Activated B cell treated with CpG ODN at 0.5 μM for 24 hours (primary cell): ENCODE measurements at regions of chr5 and their contacts with region 1.

Region 1: DNA sequence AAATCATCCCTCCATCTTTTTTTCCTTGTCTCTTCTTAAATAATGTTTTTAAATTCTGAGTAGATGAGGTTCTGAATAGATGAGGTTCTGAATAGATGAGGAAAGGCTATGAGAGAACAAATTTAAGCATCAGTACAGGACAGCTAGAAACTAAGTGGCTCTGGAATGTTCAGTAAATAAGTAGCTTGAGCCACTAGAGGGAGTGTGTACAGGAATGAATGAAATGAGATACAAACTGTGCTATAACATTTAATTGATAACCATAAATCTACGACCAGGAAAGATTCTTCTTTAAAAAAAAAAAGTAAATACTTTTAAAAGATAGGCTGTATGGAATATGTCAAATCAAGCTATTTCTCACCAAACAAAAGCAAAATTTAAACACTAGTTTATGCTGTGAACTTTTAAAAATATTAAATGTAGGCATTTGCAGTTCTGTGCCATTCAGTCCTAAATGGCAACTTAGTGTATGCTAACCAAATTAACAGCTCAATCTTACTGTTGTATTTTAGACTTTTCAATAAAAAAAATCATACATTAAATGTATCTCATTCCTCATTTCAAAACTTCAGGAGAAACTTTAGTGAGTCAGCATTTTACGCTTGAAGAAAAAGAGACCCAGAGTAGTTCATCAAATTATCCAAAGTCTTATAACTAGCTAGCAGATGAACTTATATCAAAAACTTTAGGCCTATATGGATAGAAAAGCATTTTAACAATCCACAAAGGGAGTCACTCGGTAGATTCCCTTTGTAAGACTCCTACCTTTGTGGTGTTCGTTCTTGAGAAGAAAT is 70.4 kb upstream of the SNX2 start:
- DNase-seq: no peak
- ATAC-seq: no peak
- H3K4me3 Mint-ChIP-seq: peak overlapping the region; percentile 7
- H3K27ac Mint-ChIP-seq: peak overlapping the region; percentile 94
- H3K4me1 Mint-ChIP-seq: peaks cover 63% of the 10 kb centered on the region
- H3K27me3 Mint-ChIP-seq: no peaks in the 10 kb centered on the region
- CTCF ChIP-seq: no peak

Region 2: GRCh38 chr5:122322801-122323548 is 381.5 kb before region 1 on chr5:
- CTCF ChIA-PET with region 1: no interaction called
- POLR2A ChIA-PET with region 1: no interaction called
- intact Hi-C with region 1: no loop called
- DNase-seq: no peak
- ATAC-seq: no peak
- H3K4me3 Mint-ChIP-seq: no peak overlapping the region
- H3K27ac Mint-ChIP-seq: no peak overlapping the region
- H3K4me1 Mint-ChIP-seq: no peaks in the 10 kb centered on the region
- H3K27me3 Mint-ChIP-seq: peaks cover 2% of the 10 kb centered on the region
- CTCF ChIP-seq: no peak

Region 3: GRCh38 chr5:122629121-122629677 is 75.2 kb before region 1 on chr5:
- CTCF ChIA-PET with region 1: no interaction called
- POLR2A ChIA-PET with region 1: no interaction called
- intact Hi-C with region 1: no loop called
- DNase-seq: no peak
- ATAC-seq: no peak
- H3K4me3 Mint-ChIP-seq: no peak overlapping the region
- H3K27ac Mint-ChIP-seq: no peak overlapping the region
- H3K4me1 Mint-ChIP-seq: no peaks in the 10 kb centered on the region
- H3K27me3 Mint-ChIP-seq: no peaks in the 10 kb centered on the region
- CTCF ChIP-seq: no peak

Region 4: GRCh38 chr5:122723606-122724352 is 19.3 kb after region 1 on chr5:
- CTCF ChIA-PET with region 1: interaction called, 16 read pairs
- POLR2A ChIA-PET with region 1: interaction called, 6 read pairs
- intact Hi-C with region 1: loop called (anchors 1 kb)
- DNase-seq: no peak
- ATAC-seq: peak; percentile 89
- H3K4me3 Mint-ChIP-seq: peak overlapping the region; percentile 74
- H3K27ac Mint-ChIP-seq: peak overlapping the region; percentile 91
- H3K4me1 Mint-ChIP-seq: peaks cover 57% of the 10 kb centered on the region
- H3K27me3 Mint-ChIP-seq: no peaks in the 10 kb centered on the region
- CTCF ChIP-seq: no peak

Region 5: GRCh38 chr5:122736086-122736845 is 31.8 kb after region 1 on chr5:
- CTCF ChIA-PET with region 1: interaction called, 6 read pairs
- POLR2A ChIA-PET with region 1: interaction called, 4 read pairs
- intact Hi-C with region 1: loop called (anchors 5 kb)
- DNase-seq: no peak
- ATAC-seq: peak; percentile 95
- H3K4me3 Mint-ChIP-seq: peak overlapping the region; percentile 9
- H3K27ac Mint-ChIP-seq: peak overlapping the region; percentile 26
- H3K4me1 Mint-ChIP-seq: peaks cover 16% of the 10 kb centered on the region
- H3K27me3 Mint-ChIP-seq: no peaks in the 10 kb centered on the region
- CTCF ChIP-seq: no peak

Region 6: GRCh38 chr5:122756263-122756911 is 51.9 kb after region 1 on chr5:
- CTCF ChIA-PET with region 1: interaction called, 4 read pairs
- POLR2A ChIA-PET with region 1: interaction called, 6 read pairs
- intact Hi-C with region 1: loop called (anchors 1 kb)
- DNase-seq: no peak
- ATAC-seq: peak; percentile 86
- H3K4me3 Mint-ChIP-seq: peak overlapping the region; percentile 1
- H3K27ac Mint-ChIP-seq: peak overlapping the region; percentile 72
- H3K4me1 Mint-ChIP-seq: peaks cover 28% of the 10 kb centered on the region
- H3K27me3 Mint-ChIP-seq: no peaks in the 10 kb centered on the region
- CTCF ChIP-seq: no peak

Region 7: DNA sequence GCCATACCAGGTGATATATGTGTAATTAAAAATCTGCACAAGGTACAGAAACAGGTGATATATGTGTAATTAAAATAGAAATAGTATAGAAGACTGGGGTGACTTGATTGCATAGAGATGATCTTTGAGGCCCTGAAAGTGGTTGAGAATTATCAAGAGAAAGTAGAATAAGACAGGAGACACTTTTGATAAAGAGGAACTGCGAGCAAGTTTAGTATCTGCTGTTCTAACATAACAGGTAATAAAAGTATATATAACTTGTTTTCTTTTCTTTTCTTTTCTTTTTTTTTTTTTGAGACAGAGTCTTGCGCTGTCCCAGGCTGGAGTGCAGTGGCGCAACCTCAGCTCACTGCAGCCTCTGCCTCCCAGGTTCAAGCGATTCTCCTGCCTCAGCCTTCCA is 75.9 kb after region 1 on chr5:
- CTCF ChIA-PET with region 1: interaction called, 30 read pairs
- POLR2A ChIA-PET with region 1: interaction called, 84 read pairs
- intact Hi-C with region 1: loop called (anchors 1 kb)
- DNase-seq: no peak
- ATAC-seq: peak; percentile 19
- H3K4me3 Mint-ChIP-seq: peak overlapping the region; percentile 64
- H3K27ac Mint-ChIP-seq: peak overlapping the region; percentile 85
- H3K4me1 Mint-ChIP-seq: peaks cover 72% of the 10 kb centered on the region
- H3K27me3 Mint-ChIP-seq: no peaks in the 10 kb centered on the region
- CTCF ChIP-seq: no peak

Region 8: GRCh38 chr5:122845229-122846050 is 141.0 kb after region 1 on chr5 and contains the start of gene SNX24:
- CTCF ChIA-PET with region 1: interaction called, 9 read pairs
- POLR2A ChIA-PET with region 1: interaction called, 11 read pairs
- intact Hi-C with region 1: loop called (anchors 1 kb)
- DNase-seq: peak; percentile 72
- ATAC-seq: peak; percentile 82
- H3K4me3 Mint-ChIP-seq: peak within 1 kb of the TSS; percentile 90
- H3K27ac Mint-ChIP-seq: peak within 1 kb of the TSS; percentile 82
- H3K4me1 Mint-ChIP-seq: peaks cover 36% of the 10 kb centered on the region
- H3K27me3 Mint-ChIP-seq: no peaks in the 10 kb centered on the region
- CTCF ChIP-seq: no peak
- total RNA-seq, gene SNX24: 8.2 and 8.5 TPM in 2 replicates

Region 9: GRCh38 chr5:123511648-123512605 is 807.5 kb after region 1 on chr5 and contains the start of gene CSNK1G3:
- CTCF ChIA-PET with region 1: no interaction called
- POLR2A ChIA-PET with region 1: interaction called, 3 read pairs
- intact Hi-C with region 1: loop called (anchors 5 kb)
- DNase-seq: peak; percentile 81
- ATAC-seq: peak; percentile 91
- H3K4me3 Mint-ChIP-seq: peak within 1 kb of the TSS; percentile 99
- H3K27ac Mint-ChIP-seq: peak within 1 kb of the TSS; percentile 99
- H3K4me1 Mint-ChIP-seq: peaks cover 47% of the 10 kb centered on the region
- H3K27me3 Mint-ChIP-seq: no peaks in the 10 kb centered on the region
- CTCF ChIP-seq: no peak
- total RNA-seq, gene CSNK1G3: 79.9 and 82.7 TPM in 2 replicates

Region 10: DNA sequence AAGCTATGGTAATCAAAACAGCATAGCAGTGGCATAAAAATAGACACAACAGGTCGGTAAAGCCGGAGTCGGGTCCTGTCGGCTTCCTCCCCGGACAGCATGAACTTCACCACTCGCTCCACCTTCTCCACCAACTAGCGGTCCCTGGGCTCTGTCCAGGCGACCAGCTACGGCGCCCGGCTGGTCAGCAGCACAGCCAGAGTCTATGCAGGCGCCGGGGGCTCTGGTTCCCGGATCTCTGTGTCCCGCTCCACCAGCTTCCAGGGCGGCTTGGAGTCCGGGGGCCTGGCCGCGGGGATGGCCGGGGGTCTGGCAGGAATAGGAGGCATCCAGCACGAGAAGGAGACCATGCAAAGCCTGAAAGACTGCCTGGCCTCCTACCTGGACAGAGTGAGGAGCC is 931.6 kb after region 1 on chr5:
- CTCF ChIA-PET with region 1: no interaction called
- POLR2A ChIA-PET with region 1: no interaction called
- intact Hi-C with region 1: no loop called
- DNase-seq: no peak
- ATAC-seq: no peak
- H3K4me3 Mint-ChIP-seq: no peak overlapping the region
- H3K27ac Mint-ChIP-seq: no peak overlapping the region
- H3K4me1 Mint-ChIP-seq: no peaks in the 10 kb centered on the region
- H3K27me3 Mint-ChIP-seq: peaks cover 8% of the 10 kb centered on the region
- CTCF ChIP-seq: no peak